Dorsolateral prefrontal cortex (tissue), 120 donors: ENCODE measurements at regions of chr15 and their contacts with region 1.

Region 1: DNA sequence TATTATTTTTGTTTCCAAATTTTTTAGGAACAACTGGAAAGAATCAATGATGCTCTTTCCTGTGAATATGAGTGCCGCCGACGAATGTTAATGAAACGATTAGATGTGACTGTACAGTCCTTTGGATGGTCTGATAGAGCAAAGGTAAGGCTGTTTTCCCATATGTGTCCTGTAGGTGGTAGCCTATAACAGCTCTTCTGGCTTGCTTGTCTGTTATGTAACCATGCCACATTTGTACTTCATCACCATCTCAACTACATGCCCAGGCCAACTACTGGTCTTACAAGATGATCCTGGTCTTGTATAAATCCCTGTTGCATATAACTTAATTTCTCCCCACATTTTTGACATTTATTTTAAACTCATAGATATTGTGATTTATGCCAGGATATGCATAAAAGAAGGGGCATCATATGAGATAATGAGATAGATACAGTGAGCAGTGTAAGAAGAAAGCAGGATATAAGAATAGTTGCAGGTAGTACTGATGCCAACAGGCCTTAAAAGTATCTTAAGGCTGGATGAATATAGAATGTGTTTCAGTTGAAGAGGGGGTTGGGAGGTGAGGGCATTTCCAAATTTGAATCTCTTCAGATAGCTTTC is 20.3 kb downstream of the FAM98B start:
- DNase-seq: peak in 2 of 10 donors; percentile 42 to 58
- H3K4me3 ChIP-seq: no peak overlapping the region
- H3K27ac ChIP-seq: peak overlapping the region in 43 of 59 donors; percentile 11 to 73 (median 52)
- H3K27me3 ChIP-seq: no peaks in the 10 kb centered on the region
- CTCF ChIP-seq: peak; percentile 56 to 94 (median 85)

Region 2: GRCh38 chr15:38168467-38169070 is 305.7 kb before region 1 on chr15:
- intact Hi-C with region 1: no loop called
- DNase-seq: no peak
- H3K4me3 ChIP-seq: no peak overlapping the region
- H3K27ac ChIP-seq: no peak overlapping the region
- H3K27me3 ChIP-seq: no peaks in the 10 kb centered on the region
- CTCF ChIP-seq: no peak

Region 3: DNA sequence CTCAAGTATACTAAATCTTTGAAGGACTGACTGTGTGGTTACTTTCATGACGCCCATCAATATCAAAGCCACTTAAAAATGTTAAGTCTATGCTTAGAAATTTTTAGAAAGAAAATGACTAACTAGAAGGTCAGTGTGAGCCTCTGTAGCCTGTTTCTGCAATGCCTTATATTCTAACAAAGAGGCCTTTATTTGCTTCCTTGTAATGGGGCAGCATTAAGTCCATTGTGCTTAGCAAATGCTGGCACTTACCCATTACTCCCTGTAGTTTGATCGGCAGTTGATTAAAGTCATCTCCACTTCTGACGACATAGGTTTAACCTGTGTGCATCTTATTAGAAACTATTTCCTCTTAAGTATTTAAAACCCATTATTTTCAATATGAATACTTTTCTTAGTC is 111.9 kb before region 1 on chr15:
- intact Hi-C with region 1: no loop called
- DNase-seq: no peak
- H3K4me3 ChIP-seq: peak overlapping the region in 4 of 59 donors; percentile 2 to 14 (median 10)
- H3K27ac ChIP-seq: peak overlapping the region in 20 of 59 donors; percentile 1 to 57 (median 27)
- H3K27me3 ChIP-seq: no peaks in the 10 kb centered on the region
- CTCF ChIP-seq: peak in 7 of 56 donors; percentile 10 to 30 (median 15)

Region 4: DNA sequence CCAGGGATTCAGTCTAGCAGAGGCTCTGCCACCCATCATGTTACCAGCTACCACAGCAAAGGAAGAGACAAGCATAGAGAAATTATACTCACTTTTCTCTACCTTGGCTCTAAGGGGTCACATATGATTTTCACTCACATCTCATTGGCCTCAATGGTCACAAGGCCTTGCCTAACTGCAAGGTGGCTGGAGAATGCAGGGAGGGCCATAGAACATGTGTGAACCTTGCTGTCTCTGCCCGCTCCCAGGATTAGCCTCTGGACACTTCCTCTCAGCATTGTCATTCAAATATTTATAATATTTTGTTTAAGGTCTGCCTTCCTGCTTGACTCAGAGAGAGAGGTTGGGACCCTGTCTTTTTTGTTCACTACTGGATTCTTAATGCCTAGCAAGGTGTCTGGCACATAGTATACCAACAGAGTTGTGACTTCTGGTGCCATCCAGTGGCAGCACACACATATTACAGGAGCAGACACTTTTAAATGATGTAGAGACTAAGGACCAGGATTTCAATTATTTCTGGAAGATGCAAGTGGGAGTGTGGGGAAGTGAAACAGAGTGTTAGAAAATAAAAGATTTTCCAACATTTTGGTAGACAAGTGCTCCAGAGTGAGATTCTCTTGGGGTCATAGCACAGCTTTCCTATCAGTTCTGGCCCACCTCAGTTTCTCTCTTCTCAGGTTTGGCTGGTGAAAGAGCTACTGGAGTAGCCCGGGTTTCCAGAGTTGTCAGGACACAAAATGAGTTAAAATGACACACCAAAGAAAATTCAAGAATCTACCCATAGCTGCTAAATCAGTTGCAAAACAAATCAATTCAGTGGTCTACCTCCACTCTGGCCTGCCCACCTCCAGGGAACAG is 209.4 kb after region 1 on chr15:
- intact Hi-C with region 1: loop called (anchors 2 to 5 kb)
- DNase-seq: peak; percentile 23 to 76 (median 60)
- H3K4me3 ChIP-seq: no peak overlapping the region
- H3K27ac ChIP-seq: no peak overlapping the region
- H3K27me3 ChIP-seq: no peaks in the 10 kb centered on the region
- CTCF ChIP-seq: peak; percentile 49 to 91 (median 80)

Region 5: DNA sequence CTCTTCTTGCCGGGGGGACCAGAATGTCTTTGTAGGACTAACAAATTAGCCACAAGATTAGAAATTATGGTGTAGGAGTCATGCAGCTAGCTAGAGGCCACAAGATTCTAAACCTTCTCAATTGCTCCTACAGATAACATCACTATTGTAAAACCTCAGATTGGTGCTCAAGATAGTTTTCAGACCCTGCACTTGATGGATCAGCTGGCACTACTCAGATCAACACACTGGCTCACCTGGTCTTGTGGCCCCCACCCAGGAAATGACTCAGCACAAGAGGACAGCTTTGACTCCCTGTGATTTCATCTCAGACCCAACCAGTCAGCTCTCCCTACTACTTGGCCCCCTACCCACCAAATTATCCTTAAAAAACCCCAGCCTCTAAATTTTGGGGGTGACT is 214.5 kb after region 1 on chr15:
- intact Hi-C with region 1: loop called (anchors 2 to 5 kb)
- DNase-seq: no peak
- H3K4me3 ChIP-seq: no peak overlapping the region
- H3K27ac ChIP-seq: no peak overlapping the region
- H3K27me3 ChIP-seq: no peaks in the 10 kb centered on the region
- CTCF ChIP-seq: no peak